MCF 10A (cell line): ENCODE measurements at regions of chr6 and their contacts with region 1.

Region 1: DNA sequence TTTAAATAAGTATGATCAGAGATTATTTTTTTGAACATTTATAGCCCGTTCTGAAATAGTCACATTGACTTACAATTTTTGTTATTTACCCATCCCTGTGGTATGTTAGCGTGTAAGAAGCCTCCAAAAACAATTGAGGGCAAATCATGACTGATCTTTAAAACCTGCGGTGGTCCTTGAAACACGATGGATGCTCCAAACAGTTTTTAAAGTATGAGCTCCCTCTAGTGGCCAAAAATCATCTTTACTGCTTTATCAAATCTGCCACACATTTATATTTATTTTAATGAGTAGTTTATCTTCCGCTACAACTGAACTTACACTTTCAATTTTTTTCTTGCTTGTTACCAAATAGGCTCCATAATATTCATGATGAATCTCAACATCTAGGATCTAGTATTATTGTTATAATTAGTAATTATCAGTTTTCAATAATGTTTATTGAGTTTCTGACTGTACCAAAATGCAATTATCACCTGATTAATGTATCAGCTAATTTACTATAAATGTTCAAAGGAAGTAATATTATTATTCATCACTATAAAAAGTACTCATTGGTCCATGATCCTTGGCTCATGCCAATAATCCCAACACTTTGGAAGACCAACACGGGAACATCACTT is 52.2 kb downstream of the MARCKS start:
- DNase-seq: peak; percentile 61
- H3K4me3 Mint-ChIP-seq: no peak overlapping the region
- H3K27ac Mint-ChIP-seq: no peak overlapping the region
- H3K4me1 Mint-ChIP-seq: no peaks in the 10 kb centered on the region
- H3K27me3 Mint-ChIP-seq: no peaks in the 10 kb centered on the region
- CTCF ChIP-seq: peak; percentile 53

Region 2: DNA sequence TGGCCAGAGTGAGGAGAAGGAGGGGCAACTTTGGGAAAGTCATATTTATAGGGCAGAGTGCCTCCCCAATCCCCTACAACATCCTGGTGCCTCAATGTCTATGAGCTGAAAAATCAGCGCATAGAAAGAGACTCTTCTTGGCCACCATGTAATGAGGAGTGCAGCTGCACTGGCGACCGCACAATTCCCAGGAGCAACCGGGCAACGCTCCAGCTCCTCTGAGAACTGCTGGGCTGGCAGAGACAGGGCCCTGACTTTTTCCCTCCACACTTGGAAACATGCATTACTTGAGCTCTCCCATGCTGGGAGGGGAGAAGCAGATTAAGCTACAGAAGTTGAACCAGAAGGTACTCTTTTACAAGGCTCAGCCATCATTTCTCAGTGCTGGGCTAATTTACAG is 83.6 kb before region 1 on chr6:
- CTCF ChIA-PET with region 1: no interaction called
- POLR2A ChIA-PET with region 1: no interaction called
- intact Hi-C with region 1: no loop called
- DNase-seq: no peak
- H3K4me3 Mint-ChIP-seq: no peak overlapping the region
- H3K27ac Mint-ChIP-seq: no peak overlapping the region
- H3K4me1 Mint-ChIP-seq: no peaks in the 10 kb centered on the region
- H3K27me3 Mint-ChIP-seq: no peaks in the 10 kb centered on the region
- CTCF ChIP-seq: no peak

Region 3: DNA sequence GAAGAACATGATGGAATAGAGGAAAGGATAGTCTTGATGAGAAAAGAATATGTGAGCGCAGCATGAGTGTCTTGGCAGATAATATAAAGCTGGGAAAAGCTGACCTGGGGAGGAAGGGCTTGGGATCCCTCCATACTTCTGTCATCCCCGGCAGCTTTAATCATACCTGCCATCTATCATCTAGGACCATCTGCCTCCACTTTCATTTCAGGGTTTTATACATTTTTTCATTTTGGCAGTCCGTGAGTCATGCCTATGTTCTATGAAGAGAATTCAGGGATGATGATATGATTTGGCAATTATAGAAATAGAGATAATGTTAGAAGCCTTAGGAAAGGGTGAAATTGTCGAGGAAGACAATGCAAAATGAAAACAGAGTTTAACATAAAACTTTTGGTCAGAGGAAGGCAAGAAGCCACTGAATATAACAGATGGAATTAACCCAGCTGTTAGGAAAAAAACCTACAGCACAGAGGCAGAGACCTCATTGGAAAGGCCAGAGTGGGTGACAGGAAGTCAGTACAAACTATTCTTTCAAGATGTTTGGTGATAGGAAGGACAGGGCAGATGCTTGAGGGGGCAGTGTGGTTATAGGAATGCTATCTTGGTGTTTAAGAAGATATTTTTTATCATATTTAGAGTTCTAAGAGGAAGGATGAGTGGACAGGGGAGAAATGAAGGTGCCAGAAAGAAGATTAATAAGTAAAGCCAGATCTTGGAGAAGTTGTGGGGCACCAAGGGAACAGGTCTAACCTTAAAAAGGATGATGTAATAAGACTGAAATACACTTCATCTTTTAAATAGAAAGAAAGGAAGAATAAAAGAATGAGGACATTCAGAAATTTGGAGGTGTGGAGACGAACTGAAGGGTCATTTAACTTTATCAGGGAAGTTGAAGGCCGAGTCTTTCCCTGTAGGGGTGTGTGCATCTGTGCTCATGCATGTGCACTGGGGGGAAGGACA is 14.4 kb before region 1 on chr6:
- CTCF ChIA-PET with region 1: interaction called, 40 read pairs
- POLR2A ChIA-PET with region 1: no interaction called
- intact Hi-C with region 1: no loop called
- DNase-seq: no peak
- H3K4me3 Mint-ChIP-seq: no peak overlapping the region
- H3K27ac Mint-ChIP-seq: no peak overlapping the region
- H3K4me1 Mint-ChIP-seq: no peaks in the 10 kb centered on the region
- H3K27me3 Mint-ChIP-seq: no peaks in the 10 kb centered on the region
- CTCF ChIP-seq: no peak

Region 4: GRCh38 chr6:113920663-113921267 is 11.4 kb after region 1 on chr6:
- CTCF ChIA-PET with region 1: interaction called, 17 read pairs
- POLR2A ChIA-PET with region 1: no interaction called
- intact Hi-C with region 1: no loop called
- DNase-seq: no peak
- H3K4me3 Mint-ChIP-seq: no peak overlapping the region
- H3K27ac Mint-ChIP-seq: no peak overlapping the region
- H3K4me1 Mint-ChIP-seq: no peaks in the 10 kb centered on the region
- H3K27me3 Mint-ChIP-seq: no peaks in the 10 kb centered on the region
- CTCF ChIP-seq: no peak

Region 5: GRCh38 chr6:113936093-113936934 is 27.0 kb after region 1 on chr6:
- CTCF ChIA-PET with region 1: interaction called, 11 read pairs
- POLR2A ChIA-PET with region 1: no interaction called
- intact Hi-C with region 1: no loop called
- DNase-seq: peak; percentile 58
- H3K4me3 Mint-ChIP-seq: no peak overlapping the region
- H3K27ac Mint-ChIP-seq: no peak overlapping the region
- H3K4me1 Mint-ChIP-seq: no peaks in the 10 kb centered on the region
- H3K27me3 Mint-ChIP-seq: no peaks in the 10 kb centered on the region
- CTCF ChIP-seq: peak; percentile 62